ENCODE measurements at regions of chr14 and their contacts with region 1.

Region 1: DNA sequence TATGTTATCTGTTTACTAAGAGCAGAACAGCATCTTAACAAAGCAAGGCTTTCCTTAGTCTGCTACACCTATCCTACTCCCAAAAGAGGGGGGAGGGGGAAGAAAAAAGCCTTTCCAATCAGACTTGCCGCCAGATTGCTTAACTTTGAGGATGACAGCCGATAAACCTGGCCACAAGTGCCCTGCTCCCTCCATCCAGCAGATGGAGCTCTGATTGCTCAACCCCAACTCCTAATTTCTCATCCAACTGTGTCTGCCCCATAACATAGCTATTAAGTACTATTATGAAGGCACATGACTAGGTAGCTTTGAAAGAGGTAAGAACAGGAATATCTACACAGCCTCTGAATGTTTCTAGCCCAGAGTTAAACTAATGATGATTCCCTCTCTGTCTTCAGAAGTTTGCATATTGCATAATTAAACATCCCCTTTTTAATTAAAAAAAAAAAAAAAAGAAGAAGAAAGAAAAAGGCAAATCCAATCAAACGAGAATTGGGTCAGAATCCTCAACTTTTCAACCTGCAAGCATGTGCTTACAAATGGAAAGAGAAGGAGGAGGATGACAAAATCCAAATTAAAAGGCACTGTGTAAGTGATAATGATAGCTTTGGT is 247.4 kb downstream of the GALC start:
- DNase-seq: no peak
- H3K4me3 ChIP-seq: no peak overlapping the region
- H3K27ac ChIP-seq: no peak overlapping the region
- H3K27me3 ChIP-seq: no peaks in the 10 kb centered on the region
- CTCF ChIP-seq: peak; percentile 62

Region 2: GRCh38 chr14:87896393-87897380 is 151.1 kb after region 1 on chr14:
- CTCF ChIA-PET with region 1: interaction called, 21 read pairs
- POLR2A ChIA-PET with region 1: no interaction called
- DNase-seq: peak; percentile 36
- H3K4me3 ChIP-seq: no peak overlapping the region
- H3K27ac ChIP-seq: no peak overlapping the region
- H3K27me3 ChIP-seq: no peaks in the 10 kb centered on the region
- CTCF ChIP-seq: peak; percentile 69